Transverse colon (tissue), 4 donors: ENCODE measurements at regions of chr16 and their contacts with region 1.

Region 1: GRCh38 chr16:5228369-5228768 is 130.8 kb upstream of the EEF2KMT start:
- DNase-seq: no peak
- H3K4me3 ChIP-seq: no peak overlapping the region
- H3K27ac ChIP-seq: no peak overlapping the region
- H3K4me1 ChIP-seq: peaks cover 0 to 7% (median 0%) of the 10 kb centered on the region in 4 donors
- H3K27me3 ChIP-seq: peaks cover 18% of the 10 kb centered on the region
- CTCF ChIP-seq: no peak
- EP300 ChIP-seq: no peak
- POLR2A ChIP-seq: no peak

Region 2: DNA sequence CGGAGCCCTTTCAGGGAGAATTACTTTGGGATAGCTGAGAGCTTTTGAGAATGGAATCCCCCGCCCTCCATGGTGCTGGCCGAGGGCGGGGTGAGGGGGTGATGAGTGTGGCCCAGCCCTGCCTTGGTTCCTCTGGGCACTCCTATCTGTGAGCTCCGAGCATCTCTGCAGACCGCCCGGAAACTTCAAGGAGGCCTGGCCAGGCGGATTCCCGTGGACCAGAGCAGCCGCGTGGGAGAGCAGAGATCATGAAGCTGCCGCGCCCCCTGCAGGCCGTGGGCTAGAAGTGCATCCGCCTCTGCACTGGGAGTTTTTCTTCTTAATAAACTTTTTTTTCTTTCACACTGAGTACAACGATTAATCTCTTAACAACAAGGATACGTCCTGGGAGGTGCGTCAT is 262.1 kb after region 1 on chr16:
- in situ Hi-C with region 1: loop called in 1 of 4 experiments (anchors 25 kb)
- intact Hi-C with region 1: no loop called
- DNase-seq: peak; percentile 69
- H3K4me3 ChIP-seq: no peak overlapping the region
- H3K27ac ChIP-seq: no peak overlapping the region
- H3K4me1 ChIP-seq: no peaks in the 10 kb centered on the region
- H3K27me3 ChIP-seq: no peaks in the 10 kb centered on the region
- CTCF ChIP-seq: peak; percentile 63 to 90 (median 84)
- EP300 ChIP-seq: no peak
- POLR2A ChIP-seq: no peak

Region 3: DNA sequence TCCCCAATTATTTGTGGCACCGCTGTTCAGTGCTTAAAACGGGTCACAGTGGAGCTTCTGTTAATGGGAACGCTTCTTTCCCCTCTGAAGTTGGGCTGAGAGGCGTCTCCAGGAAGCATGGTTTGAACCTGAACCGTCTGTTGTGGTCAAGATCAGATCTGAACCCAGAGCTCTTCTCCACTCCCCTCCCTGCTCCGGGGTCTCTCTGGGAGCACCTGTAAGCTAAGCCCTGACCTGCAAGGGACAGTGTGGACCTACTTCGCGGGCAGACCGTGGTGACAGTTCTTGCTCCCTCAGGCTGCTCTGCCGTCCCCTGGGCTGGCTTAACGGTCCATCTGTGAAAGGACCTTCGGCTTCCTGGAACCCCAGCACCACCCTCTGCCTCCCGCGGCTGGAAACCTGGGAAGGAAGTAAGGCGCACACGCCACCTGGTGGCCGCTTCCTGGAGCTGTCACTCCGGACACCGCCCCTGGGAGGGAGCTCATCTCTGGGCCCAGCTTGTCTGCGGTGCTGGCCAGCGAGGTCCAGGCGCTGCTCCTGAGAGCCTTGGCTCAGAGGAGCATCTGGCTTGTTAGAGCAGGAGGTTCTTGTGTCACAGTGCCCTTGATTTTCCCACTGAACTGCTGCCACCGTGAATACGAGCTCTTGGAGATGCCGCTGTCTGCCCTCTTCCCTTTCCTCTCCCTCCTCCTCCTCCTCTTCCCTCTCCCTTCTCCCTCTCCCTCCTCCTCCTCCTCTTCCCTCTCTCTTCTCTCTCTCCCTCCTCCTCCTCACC is 387.7 kb after region 1 on chr16:
- in situ Hi-C with region 1: loop called in 2 of 4 experiments (anchors 25 kb)
- intact Hi-C with region 1: no loop called
- DNase-seq: peak; percentile 64
- H3K4me3 ChIP-seq: no peak overlapping the region
- H3K27ac ChIP-seq: no peak overlapping the region
- H3K4me1 ChIP-seq: peaks cover 0 to 4% (median 0%) of the 10 kb centered on the region in 4 donors
- H3K27me3 ChIP-seq: peaks cover 11% of the 10 kb centered on the region
- CTCF ChIP-seq: peak; percentile 57 to 81 (median 74)
- EP300 ChIP-seq: no peak
- POLR2A ChIP-seq: no peak

Region 4: DNA sequence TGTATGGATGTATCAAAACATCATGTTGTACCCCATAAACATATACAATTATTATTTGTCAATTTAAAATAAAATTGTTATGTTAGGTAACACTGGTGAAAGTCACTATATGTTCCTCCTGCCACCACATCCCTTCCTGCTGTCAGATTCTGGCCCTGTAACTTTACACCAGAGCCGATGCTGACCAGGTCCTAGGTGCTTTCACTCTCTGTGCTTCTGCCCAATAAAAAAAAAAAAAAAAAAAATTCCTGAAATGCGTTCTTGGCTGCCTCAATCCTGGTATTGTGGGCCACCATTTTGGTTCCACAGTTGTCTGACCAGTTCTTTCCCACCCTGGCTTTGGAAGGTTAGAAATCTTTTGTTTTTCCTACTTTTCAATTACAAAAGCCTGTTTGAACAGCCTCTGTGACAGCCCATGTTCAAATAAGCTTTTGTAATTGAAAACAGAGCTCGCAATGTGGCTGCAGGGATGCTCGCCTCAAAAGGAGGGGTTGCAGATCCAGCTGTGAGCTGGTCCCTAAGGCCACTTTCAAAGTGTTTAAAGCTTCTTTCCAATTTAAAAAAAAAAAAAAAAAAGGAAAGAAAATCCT is 700.2 kb after region 1 on chr16:
- in situ Hi-C with region 1: no loop called
- intact Hi-C with region 1: no loop called
- DNase-seq: no peak
- H3K4me3 ChIP-seq: no peak overlapping the region
- H3K27ac ChIP-seq: no peak overlapping the region
- H3K4me1 ChIP-seq: no peaks in the 10 kb centered on the region
- H3K27me3 ChIP-seq: no peaks in the 10 kb centered on the region
- CTCF ChIP-seq: no peak
- EP300 ChIP-seq: no peak
- POLR2A ChIP-seq: no peak

Region 5: GRCh38 chr16:6643080-6643686 is 1414.8 kb after region 1 on chr16:
- in situ Hi-C with region 1: loop called in 2 of 4 experiments (anchors 25 kb)
- intact Hi-C with region 1: no loop called
- DNase-seq: peak; percentile 49
- H3K4me3 ChIP-seq: no peak overlapping the region
- H3K27ac ChIP-seq: no peak overlapping the region
- H3K4me1 ChIP-seq: no peaks in the 10 kb centered on the region
- H3K27me3 ChIP-seq: peaks cover 8% of the 10 kb centered on the region
- CTCF ChIP-seq: peak; percentile 82 to 90 (median 86)
- EP300 ChIP-seq: no peak
- POLR2A ChIP-seq: no peak